Activated T-helper 1 cell treated with anti-CD3 and anti-CD28 coated beads, Interleukin-12 subunit alpha, Interleukin-12 subunit beta, Interleukin-2, Interleukin-4 antibody, amounts not matched to agents 30 ng/mL and 10 ng/mL and 1 ng/mL, durations not matched to agents 14 hours and 24 hours and 36 hours (primary cell): ENCODE measurements at regions of chr12 and their contacts with region 1.

Region 1: GRCh38 chr12:12008931-12009611 is 61.7 kb upstream of the BCL2L14 start:
- DNase-seq: peak; percentile 56
- H3K4me3 Mint-ChIP-seq: peak overlapping the region; percentile 73
- H3K27ac Mint-ChIP-seq: peak overlapping the region; percentile 97
- H3K4me1 Mint-ChIP-seq: peaks cover 88% of the 10 kb centered on the region
- H3K27me3 Mint-ChIP-seq: peaks cover 1% of the 10 kb centered on the region

Region 2: DNA sequence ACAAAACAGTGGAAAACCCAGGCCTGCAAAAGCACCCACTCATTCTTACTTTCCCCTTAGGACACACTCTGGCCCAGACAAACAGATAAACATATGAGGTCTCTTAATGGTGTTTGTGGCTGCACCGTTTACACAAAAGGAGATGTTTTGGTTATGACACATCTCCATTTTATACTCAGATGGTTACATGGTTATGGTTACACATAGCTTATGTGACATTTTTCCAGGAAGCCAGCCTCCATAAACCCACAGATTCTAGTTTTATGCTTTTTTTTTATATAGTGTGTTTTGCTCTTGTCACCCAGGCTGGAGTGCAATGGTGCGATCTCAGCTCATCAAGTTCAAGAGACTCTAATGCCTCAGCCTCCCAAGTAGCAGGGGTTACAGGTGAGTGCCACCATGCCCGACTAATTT is 1704.9 kb before region 1 on chr12:
- intact Hi-C with region 1: loop called (anchors 10 kb)
- DNase-seq: peak; percentile 34
- H3K4me3 Mint-ChIP-seq: no peak overlapping the region
- H3K27ac Mint-ChIP-seq: peak overlapping the region; percentile 54
- H3K4me1 Mint-ChIP-seq: peaks cover 51% of the 10 kb centered on the region
- H3K27me3 Mint-ChIP-seq: peaks cover 7% of the 10 kb centered on the region

Region 3: DNA sequence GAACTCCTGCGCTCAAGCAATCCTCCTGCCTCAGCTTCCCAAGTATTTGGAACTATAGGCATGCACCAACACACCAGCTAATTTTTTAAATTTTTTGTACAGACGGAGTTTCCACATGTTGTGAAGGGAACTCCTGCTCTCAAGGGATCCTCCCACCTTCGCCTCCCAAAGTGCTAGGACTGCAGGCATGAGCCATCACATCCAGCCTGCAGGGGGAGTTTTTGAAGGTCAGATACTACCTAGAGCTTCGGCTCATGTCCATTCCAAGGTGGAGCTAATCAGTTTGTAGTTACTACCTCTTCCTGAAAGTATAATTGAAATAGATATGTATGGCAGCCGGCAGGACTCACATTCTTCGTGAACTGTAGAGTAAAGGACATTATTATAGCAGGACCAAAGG is 983.0 kb before region 1 on chr12:
- intact Hi-C with region 1: no loop called
- DNase-seq: no peak
- H3K4me3 Mint-ChIP-seq: no peak overlapping the region
- H3K27ac Mint-ChIP-seq: no peak overlapping the region
- H3K4me1 Mint-ChIP-seq: peaks cover 4% of the 10 kb centered on the region
- H3K27me3 Mint-ChIP-seq: peaks cover 2% of the 10 kb centered on the region

Region 4: GRCh38 chr12:11765817-11766794 is 243.0 kb before region 1 on chr12:
- intact Hi-C with region 1: loop called (anchors 1 kb)
- DNase-seq: peak; percentile 19
- H3K4me3 Mint-ChIP-seq: peak overlapping the region; percentile 47
- H3K27ac Mint-ChIP-seq: peak overlapping the region; percentile 93
- H3K4me1 Mint-ChIP-seq: peaks cover 100% of the 10 kb centered on the region
- H3K27me3 Mint-ChIP-seq: no peaks in the 10 kb centered on the region

Region 5: GRCh38 chr12:11861155-11861863 is 147.8 kb before region 1 on chr12:
- intact Hi-C with region 1: loop called (anchors 1 kb)
- DNase-seq: no peak
- H3K4me3 Mint-ChIP-seq: no peak overlapping the region
- H3K27ac Mint-ChIP-seq: peak overlapping the region; percentile 81
- H3K4me1 Mint-ChIP-seq: peaks cover 82% of the 10 kb centered on the region
- H3K27me3 Mint-ChIP-seq: no peaks in the 10 kb centered on the region

Region 6: DNA sequence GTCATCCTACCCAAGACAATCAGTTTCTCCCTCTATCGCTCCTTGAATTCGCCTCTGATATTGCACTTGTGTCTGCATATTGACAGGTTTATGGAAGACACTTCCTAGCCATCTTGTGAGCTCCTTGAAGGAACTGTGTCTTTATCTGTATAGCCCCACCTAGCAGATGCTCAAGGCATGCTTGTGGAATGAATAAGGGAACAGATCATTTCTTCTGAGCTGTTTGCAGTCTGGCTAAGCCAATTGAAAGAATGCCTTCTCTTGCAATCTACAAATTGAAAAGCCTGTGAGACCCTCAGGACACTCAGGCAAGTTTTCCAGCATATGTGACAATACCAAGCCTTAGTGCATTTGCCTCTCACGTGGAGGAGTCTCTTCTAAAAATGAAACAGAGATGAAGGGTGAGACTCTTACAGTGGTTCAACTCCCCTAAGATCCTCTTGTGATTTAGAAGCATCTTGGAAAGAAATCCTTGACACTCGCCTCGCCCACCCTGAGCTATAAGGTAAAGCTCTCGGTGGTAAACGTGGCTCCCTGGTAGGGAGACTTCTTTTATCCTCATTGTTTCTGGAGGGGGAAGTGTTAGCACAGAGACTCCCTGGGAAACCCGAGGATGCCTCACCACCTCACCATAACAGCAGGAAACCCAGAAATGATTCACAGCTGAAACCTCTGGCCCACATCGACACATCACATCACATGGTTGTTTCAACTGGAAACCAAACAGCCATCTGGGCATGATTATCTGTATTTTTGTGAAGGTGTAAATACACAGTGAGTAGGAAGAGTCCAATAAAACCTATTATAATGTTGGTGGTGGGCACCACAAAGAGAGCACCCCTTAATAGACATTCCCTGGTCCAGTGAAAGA is 50.6 kb before region 1 on chr12:
- intact Hi-C with region 1: loop called (anchors 1 kb)
- DNase-seq: peak; percentile 55
- H3K4me3 Mint-ChIP-seq: peak overlapping the region; percentile 29
- H3K27ac Mint-ChIP-seq: peak overlapping the region; percentile 89
- H3K4me1 Mint-ChIP-seq: peaks cover 76% of the 10 kb centered on the region
- H3K27me3 Mint-ChIP-seq: no peaks in the 10 kb centered on the region

Region 7: DNA sequence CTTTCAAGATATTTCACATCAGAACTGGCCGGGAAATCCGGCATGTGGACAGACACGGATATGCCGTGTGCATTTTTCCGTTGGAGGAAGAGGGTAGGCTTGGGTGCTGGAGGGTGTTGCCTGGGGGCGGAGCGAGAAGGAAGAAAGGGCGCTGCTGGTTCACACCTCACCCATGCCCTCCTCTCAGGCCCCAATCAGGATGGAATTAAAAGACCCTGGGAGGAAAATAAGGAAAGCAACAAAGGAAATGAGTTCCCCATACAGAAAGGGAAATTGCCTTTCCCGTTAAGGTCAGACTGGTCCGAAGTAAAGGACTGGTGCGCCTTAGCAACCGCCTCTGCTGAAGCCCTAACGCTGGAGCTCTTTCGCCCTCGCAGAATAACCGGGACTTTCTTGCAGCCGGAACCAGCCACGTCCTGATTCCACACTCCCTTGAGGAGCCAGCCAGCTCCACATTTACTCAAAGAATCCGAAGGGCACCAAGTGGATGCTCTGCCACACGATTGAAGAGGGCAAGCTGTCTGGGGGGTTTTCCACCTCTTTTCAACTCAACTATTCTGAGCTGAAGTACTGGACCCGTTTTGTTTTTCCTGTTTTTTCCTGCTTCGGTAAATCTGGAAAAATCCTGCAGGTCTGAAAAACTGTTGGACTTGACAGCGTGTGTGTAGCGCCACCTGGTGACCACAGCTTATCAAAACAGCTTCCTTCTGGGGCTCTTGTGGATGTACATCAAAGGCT is 23.9 kb after region 1 on chr12:
- intact Hi-C with region 1: loop called (anchors 1 kb)
- DNase-seq: peak; percentile 57
- H3K4me3 Mint-ChIP-seq: peak overlapping the region; percentile 83
- H3K27ac Mint-ChIP-seq: peak overlapping the region; percentile 97
- H3K4me1 Mint-ChIP-seq: peaks cover 74% of the 10 kb centered on the region
- H3K27me3 Mint-ChIP-seq: no peaks in the 10 kb centered on the region

Region 8: GRCh38 chr12:12356886-12357718 is 348.0 kb after region 1 on chr12 and contains the start of gene BORCS5:
- intact Hi-C with region 1: loop called (anchors 1 kb)
- DNase-seq: peak; percentile 98
- H3K4me3 Mint-ChIP-seq: peak within 1 kb of the TSS; percentile 97
- H3K27ac Mint-ChIP-seq: peak within 1 kb of the TSS; percentile 96
- H3K4me1 Mint-ChIP-seq: peaks cover 48% of the 10 kb centered on the region
- H3K27me3 Mint-ChIP-seq: no peaks in the 10 kb centered on the region
- total RNA-seq, gene BORCS5: 34.5 and 39.6 TPM in 2 replicates